ENCODE measurements at regions of chr17 and their contacts with region 1.

Region 1: GRCh38 chr17:35214631-35215273 is 20.6 kb upstream of the SLC35G3 start:
- DNase-seq: no peak
- H3K4me3 ChIP-seq: no peak overlapping the region
- H3K27ac ChIP-seq: peak overlapping the region in 3 of 4 donors; percentile 31 to 75 (median 55)
- H3K4me1 ChIP-seq: peaks cover 0 to 21% (median 6%) of the 10 kb centered on the region in 3 donors
- H3K27me3 ChIP-seq: peaks cover 0 to 10% (median 0%) of the 10 kb centered on the region in 4 donors
- CTCF ChIP-seq: no peak
- POLR2A ChIP-seq: no peak

Region 2: DNA sequence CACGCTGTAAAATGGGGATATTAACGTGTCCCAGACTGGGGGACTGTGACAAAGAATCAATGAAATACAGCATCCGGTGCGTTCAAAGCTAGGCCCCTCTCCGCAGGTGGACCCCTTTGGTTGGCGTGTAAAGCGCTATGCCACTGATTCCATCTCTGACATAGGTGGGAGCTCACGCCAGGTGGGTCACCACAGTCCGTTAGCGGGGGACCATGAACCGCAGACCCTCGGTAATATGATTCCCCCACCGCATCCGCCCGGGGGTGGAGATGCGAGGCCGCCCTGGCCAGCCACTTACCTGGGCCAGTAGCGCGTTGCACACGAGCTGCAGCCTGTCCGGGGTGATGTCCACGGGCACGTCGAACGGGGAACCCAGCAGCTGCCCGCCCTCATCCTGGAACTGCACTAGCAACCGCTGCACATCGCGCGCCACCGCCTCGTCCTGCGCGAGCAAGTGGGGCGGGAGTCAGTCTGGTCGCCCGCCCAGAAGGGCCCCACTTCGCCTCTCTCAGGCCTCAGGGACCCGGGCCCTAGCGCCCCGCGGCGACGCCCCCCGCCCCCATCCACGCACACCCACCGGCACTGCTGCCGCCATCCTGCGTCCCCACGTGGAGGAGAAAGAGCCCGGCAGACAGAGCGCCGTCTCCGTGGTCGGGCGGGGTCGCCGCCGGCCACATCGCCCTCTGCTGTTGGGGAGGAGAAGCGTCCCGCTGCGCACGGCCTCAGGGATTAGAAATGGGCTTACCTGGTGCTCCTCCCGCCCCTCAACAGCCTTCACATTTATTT is 72.9 kb before region 1 on chr17 and contains the start of gene NLE1:
- intact Hi-C with region 1: loop called (anchors 10 kb)
- DNase-seq: no peak
- H3K4me3 ChIP-seq: peak within 1 kb of the TSS; percentile 70 to 89 (median 83)
- H3K27ac ChIP-seq: peak within 1 kb of the TSS; percentile 22 to 68 (median 48)
- H3K4me1 ChIP-seq: peaks cover 0 to 27% (median 7%) of the 10 kb centered on the region in 3 donors
- H3K27me3 ChIP-seq: no peaks in the 10 kb centered on the region
- CTCF ChIP-seq: peak; percentile 87 to 97 (median 92)
- POLR2A ChIP-seq: no peak
- total RNA-seq, gene NLE1: 8.2 to 19.6 (median 17.8) TPM

Measured in esophagus squamous epithelium (tissue), 5 donors.